AG04450 (cell line): ENCODE measurements at regions of chr3 and their contacts with region 1.

Region 1: GRCh38 chr3:49523756-49524747 is 30.2 kb upstream of the BSN start:
- DNase-seq: no peak
- H3K4me3 ChIP-seq: no peak overlapping the region
- H3K27ac ChIP-seq: peak overlapping the region; percentile 2
- H3K27me3 ChIP-seq: no peaks in the 10 kb centered on the region
- CTCF ChIP-seq: no peak

Region 2: DNA sequence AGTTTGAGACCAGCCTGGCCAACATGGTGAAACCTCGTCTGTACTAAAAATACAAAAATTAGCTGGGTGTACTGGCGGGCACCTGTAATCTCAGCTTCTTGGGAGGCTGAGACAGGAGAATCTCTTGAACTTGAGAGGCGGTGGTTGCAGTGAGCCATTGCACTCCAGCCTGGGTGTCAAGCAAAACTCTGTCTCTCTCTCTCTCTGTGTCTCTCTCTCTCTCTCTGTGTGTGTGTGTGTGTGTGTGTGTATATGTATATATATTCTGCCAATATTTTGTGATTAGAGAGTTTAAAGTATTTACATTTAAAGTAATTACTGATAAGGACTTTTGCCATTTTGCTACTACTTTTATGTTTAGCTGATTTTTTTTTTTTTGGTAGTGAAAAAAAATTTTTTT is 431.6 kb after region 1 on chr3:
- CTCF ChIA-PET with region 1: no interaction called
- POLR2A ChIA-PET with region 1: interaction called, 10 read pairs
- DNase-seq: no peak
- H3K4me3 ChIP-seq: no peak overlapping the region
- H3K27ac ChIP-seq: no peak overlapping the region
- H3K27me3 ChIP-seq: no peaks in the 10 kb centered on the region
- CTCF ChIP-seq: no peak